Ovary (tissue), 10 donors: ENCODE measurements at regions of chr16 and their contacts with region 1.

Region 1: GRCh38 chr16:19086322-19087199 is 19.1 kb downstream of the COQ7 start:
- DNase-seq: peak; percentile 61 to 87 (median 79)
- H3K4me3 ChIP-seq: peak overlapping the region; percentile 15
- H3K27ac ChIP-seq: no peak overlapping the region
- H3K4me1 ChIP-seq: no peaks in the 10 kb centered on the region
- H3K27me3 ChIP-seq: no peaks in the 10 kb centered on the region
- CTCF ChIP-seq: peak; percentile 95 to 97 (median 96)
- EP300 ChIP-seq: no peak
- POLR2A ChIP-seq: no peak

Region 2: GRCh38 chr16:19375561-19376158 is 289.1 kb after region 1 on chr16:
- intact Hi-C with region 1: loop called (anchors 5 kb)
- DNase-seq: peak in 4 of 5 donors; percentile 23 to 38 (median 32)
- H3K4me3 ChIP-seq: no peak overlapping the region
- H3K27ac ChIP-seq: no peak overlapping the region
- H3K4me1 ChIP-seq: no peaks in the 10 kb centered on the region
- H3K27me3 ChIP-seq: no peaks in the 10 kb centered on the region
- CTCF ChIP-seq: peak; percentile 36 to 80 (median 68)
- EP300 ChIP-seq: no peak
- POLR2A ChIP-seq: no peak